Activated CD8-positive, alpha-beta T cell treated with anti-CD3 and anti-CD28 coated beads for 36 hours (primary cell): ENCODE measurements at regions of chr21 and their contacts with region 1.

Region 1: DNA sequence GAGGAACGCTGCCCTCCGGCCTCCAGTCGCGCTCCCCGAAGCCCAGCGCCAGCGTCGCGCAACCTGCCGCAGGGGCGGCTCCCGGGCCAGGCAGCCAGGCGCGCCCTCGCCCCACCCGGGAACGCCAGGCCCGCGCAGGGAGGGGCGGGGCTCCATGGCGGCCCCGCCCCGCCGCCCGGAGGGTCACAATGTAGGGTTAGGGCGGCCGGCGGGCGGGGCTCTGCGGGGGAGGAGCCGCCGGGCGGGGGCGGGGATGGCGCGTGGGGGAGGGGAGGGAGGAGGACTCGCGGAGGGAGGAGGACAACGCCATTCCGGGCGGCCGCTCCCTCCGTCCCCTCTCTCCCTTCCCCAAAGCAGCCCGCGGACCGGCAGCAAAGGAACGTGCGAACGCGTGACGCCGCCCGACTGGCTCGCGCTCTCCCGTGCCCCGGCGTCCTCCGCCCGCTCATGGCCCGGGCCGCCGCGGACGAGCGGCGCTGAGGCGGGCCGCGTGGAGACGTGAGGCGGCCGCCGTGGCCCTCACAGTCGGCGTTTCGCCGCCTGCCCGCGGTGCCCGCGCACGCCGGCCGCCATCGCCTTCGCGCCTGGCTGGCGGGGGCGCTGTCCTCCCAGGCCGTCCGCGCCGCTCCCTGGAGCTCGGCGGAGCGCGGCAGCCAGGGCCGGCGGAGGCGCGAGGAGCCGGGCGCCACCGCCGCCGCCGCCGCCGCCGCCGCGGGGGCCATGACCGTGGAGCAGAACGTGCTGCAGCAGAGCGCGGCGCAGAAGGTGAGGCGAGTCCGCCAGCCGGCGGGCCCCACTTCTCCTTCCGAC is at the start of gene USP25:
- DNase-seq: peak; percentile 80
- ATAC-seq: peak; percentile 79
- H3K4me3 Mint-ChIP-seq: peak within 1 kb of the TSS; percentile 94
- H3K27ac Mint-ChIP-seq: peak within 1 kb of the TSS; percentile 90
- H3K4me1 Mint-ChIP-seq: peaks cover 19% of the 10 kb centered on the region
- H3K27me3 Mint-ChIP-seq: peaks cover 2% of the 10 kb centered on the region
- CTCF ChIP-seq: no peak
- total RNA-seq, gene USP25: 34.1 to 34.6 TPM

Region 2: GRCh38 chr21:14382835-14383594 is 1346.9 kb before region 1 on chr21 and contains the start of gene HSPA13:
- CTCF ChIA-PET with region 1: no interaction called
- POLR2A ChIA-PET with region 1: no interaction called
- intact Hi-C with region 1: loop called (anchors 10 kb)
- DNase-seq: peak; percentile 100
- ATAC-seq: peak; percentile 96
- H3K4me3 Mint-ChIP-seq: peak within 1 kb of the TSS; percentile 92
- H3K27ac Mint-ChIP-seq: peak within 1 kb of the TSS; percentile 97
- H3K4me1 Mint-ChIP-seq: peaks cover 30% of the 10 kb centered on the region
- H3K27me3 Mint-ChIP-seq: no peaks in the 10 kb centered on the region
- CTCF ChIP-seq: no peak
- total RNA-seq, gene HSPA13: 37.1 to 39.8 TPM

Region 3: DNA sequence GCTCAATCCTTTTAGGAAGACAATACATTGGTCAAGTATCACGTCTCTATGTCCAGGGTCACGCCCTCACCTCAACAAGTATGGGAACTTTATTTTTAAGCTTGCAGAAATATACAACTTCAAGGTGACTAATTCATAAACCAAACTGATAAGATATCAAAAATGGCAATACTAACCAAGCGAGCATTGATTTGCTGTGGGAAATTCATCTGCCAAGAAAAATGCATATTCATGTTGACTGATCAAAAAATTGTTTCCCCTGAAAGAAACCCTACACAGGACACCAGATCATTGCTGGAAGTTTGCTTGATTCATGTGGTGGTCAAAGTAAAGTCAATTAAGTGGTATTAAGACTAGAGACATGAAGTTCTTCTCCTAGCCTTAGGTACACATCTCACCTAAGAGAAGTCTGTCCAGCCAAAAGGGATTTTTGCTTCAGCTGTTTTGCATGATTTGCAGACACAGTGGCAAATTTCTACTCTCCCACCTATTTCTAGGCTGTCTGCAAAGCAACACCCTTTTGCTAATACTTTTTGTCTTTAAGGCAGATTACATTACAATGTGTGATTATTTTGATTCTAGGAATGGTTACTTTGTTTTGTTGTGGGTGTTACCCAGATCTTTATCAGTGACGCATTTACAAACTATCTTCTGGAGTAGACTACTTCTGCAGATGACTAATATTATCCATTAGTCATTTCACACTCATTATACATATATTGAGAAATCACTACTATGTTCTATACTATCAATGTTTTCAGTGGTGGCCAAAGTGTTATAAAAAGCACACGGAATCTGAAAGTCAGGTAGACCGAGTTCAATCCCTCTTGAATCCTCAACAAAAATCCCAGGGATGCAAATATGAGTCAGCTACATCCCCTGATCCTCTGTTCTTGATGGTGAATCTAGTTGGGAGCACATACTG is 1196.1 kb before region 1 on chr21:
- CTCF ChIA-PET with region 1: no interaction called
- POLR2A ChIA-PET with region 1: no interaction called
- intact Hi-C with region 1: loop called (anchors 5 kb)
- DNase-seq: no peak
- ATAC-seq: peak; percentile 79
- H3K4me3 Mint-ChIP-seq: peak overlapping the region; percentile 72
- H3K27ac Mint-ChIP-seq: peak overlapping the region; percentile 99
- H3K4me1 Mint-ChIP-seq: peaks cover 78% of the 10 kb centered on the region
- H3K27me3 Mint-ChIP-seq: no peaks in the 10 kb centered on the region
- CTCF ChIP-seq: no peak

Region 4: DNA sequence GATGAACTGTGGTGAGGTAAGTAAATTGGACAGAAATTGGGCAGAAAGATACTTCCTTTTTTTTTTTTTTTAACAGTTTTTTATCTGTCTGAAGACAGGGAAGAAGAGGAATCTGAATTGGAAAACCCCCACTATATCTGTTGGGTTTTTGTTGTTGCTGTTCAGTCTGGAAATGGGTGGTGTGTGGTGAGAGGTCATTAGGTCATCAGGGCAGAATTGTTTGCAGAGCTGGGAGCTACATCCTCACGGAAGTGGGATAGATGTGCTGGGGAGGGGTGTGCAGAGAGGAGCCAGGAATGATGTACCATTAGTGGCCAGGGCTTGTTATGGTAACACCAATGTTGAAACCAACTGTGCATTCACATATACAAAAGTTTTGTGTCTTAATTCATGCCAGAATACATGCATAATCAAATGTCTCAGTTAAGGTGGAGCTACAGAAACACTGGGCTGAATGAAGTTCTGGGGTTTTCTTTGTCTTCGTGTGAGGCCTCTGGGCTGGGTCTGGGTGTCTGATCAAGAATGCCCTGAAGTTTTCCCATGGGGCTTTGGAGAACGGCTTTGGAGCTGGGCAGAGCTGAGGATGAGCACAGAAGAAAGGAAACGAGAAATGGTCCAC is 12.3 kb after region 1 on chr21:
- CTCF ChIA-PET with region 1: interaction called, 4 read pairs
- POLR2A ChIA-PET with region 1: interaction called, 11 read pairs
- intact Hi-C with region 1: no loop called
- DNase-seq: no peak
- ATAC-seq: no peak
- H3K4me3 Mint-ChIP-seq: no peak overlapping the region
- H3K27ac Mint-ChIP-seq: peak overlapping the region; percentile 7
- H3K4me1 Mint-ChIP-seq: peaks cover 66% of the 10 kb centered on the region
- H3K27me3 Mint-ChIP-seq: no peaks in the 10 kb centered on the region
- CTCF ChIP-seq: no peak

Region 5: GRCh38 chr21:15797577-15798363 is 67.9 kb after region 1 on chr21:
- CTCF ChIA-PET with region 1: no interaction called
- POLR2A ChIA-PET with region 1: no interaction called
- intact Hi-C with region 1: loop called (anchors 5 kb)
- DNase-seq: no peak
- ATAC-seq: peak; percentile 43
- H3K4me3 Mint-ChIP-seq: no peak overlapping the region
- H3K27ac Mint-ChIP-seq: peak overlapping the region; percentile 53
- H3K4me1 Mint-ChIP-seq: peaks cover 61% of the 10 kb centered on the region
- H3K27me3 Mint-ChIP-seq: no peaks in the 10 kb centered on the region
- CTCF ChIP-seq: no peak

Region 6: GRCh38 chr21:15820852-15821379 is 91.0 kb after region 1 on chr21:
- CTCF ChIA-PET with region 1: interaction called, 5 read pairs
- POLR2A ChIA-PET with region 1: interaction called, 3 read pairs
- intact Hi-C with region 1: loop called (anchors 5 kb)
- DNase-seq: no peak
- ATAC-seq: no peak
- H3K4me3 Mint-ChIP-seq: no peak overlapping the region
- H3K27ac Mint-ChIP-seq: no peak overlapping the region
- H3K4me1 Mint-ChIP-seq: peaks cover 37% of the 10 kb centered on the region
- H3K27me3 Mint-ChIP-seq: no peaks in the 10 kb centered on the region
- CTCF ChIP-seq: no peak